ENCODE measurements at regions of chr4 and their contacts with region 1.

Region 1: DNA sequence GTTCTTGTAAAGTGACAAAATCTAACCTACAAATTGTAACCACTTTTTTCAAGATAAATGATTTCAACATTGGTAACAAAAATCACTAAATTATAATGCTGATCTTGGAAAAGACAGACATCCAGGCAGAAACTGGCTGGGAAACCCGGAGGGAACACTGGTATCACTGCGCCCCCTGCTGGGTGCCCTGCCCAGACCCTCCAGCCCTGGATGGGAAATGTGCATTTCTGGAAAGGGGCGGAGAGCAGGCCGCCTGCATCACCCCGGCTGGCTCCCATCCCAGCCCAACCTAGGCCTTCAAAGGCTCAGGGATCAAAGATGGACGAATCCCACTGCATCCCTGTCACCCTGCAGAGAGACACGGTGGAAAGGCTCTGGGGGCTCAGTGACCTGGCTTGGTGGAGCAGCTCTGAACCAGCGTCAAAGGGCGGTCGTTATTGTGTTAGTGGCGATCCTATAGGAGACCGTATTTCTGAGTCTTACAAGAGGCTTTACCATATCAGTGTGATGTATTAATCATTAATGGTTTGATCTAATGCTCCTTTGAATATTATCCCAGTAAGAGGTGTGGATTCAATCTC is 37.3 kb downstream of the ACOX3 start:
- DNase-seq: peak; percentile 87 to 93 (median 90)
- ATAC-seq: peak; percentile 73 to 88 (median 84)
- H3K4me3 ChIP-seq: no peak overlapping the region
- H3K27ac ChIP-seq: peak overlapping the region; percentile 45 to 91 (median 80)
- H3K4me1 ChIP-seq: peaks cover 7 to 44% (median 27%) of the 10 kb centered on the region in 12 donors
- H3K27me3 ChIP-seq: no peaks in the 10 kb centered on the region
- CTCF ChIP-seq: peak; percentile 89 to 97 (median 94)
- POLR2A ChIP-seq: no peak

Region 2: GRCh38 chr4:8110071-8110986 is 292.9 kb before region 1 on chr4:
- intact Hi-C with region 1: no loop called
- DNase-seq: peak in 1 of 5 donors; percentile 47
- ATAC-seq: no peak
- H3K4me3 ChIP-seq: no peak overlapping the region
- H3K27ac ChIP-seq: no peak overlapping the region
- H3K4me1 ChIP-seq: peaks cover 0 to 28% (median 16%) of the 10 kb centered on the region in 12 donors
- H3K27me3 ChIP-seq: no peaks in the 10 kb centered on the region
- CTCF ChIP-seq: peak in 4 of 12 donors; percentile 4 to 17 (median 10)
- POLR2A ChIP-seq: no peak

Region 3: DNA sequence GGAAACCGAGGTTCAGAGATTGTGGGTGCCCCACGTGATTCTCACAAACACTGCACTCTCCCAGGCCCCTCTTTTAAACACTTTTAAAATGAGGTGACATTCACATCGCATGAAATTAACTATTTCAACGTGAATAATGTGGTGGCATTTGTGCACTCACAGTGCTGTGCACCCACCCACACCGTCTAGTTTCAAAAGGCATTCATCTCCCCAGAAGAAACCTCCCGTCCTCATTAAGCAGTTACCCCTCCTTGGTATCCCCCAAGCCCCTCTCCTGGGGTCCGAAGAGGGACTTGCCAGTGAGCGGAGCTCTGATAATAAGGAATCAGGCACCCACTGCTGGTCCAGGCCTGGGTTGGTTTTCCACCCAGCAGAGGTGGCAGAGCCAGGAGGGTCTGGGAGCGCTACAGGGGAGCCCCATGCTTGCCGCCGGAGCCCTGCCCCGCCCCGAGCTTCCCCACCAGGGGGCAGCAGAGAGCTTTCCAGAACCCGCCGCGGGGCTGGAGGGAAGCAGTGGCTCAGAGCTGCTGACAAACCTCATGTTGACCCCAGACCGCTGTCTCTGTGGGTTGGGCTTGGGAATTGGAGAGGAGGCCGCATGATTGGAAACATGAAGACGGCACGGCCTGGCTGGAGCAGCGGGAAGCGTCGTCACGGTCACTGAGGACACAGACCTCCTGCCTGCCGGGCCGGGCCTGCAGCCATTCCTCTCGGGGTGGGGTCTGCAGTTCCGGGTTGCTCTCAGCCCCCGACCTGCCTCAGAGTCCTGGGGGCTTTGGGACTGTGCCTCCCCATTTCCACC is 161.2 kb before region 1 on chr4:
- intact Hi-C with region 1: loop called (anchors 1 to 2 kb)
- DNase-seq: peak; percentile 87 to 93 (median 88)
- ATAC-seq: peak; percentile 75 to 91 (median 86)
- H3K4me3 ChIP-seq: no peak overlapping the region
- H3K27ac ChIP-seq: peak overlapping the region in 7 of 12 donors; percentile 9 to 63 (median 47)
- H3K4me1 ChIP-seq: peaks cover 0 to 21% (median 15%) of the 10 kb centered on the region in 12 donors
- H3K27me3 ChIP-seq: no peaks in the 10 kb centered on the region
- CTCF ChIP-seq: peak; percentile 97 to 100 (median 98)
- POLR2A ChIP-seq: no peak

Region 4: GRCh38 chr4:8267077-8267476 is 136.2 kb before region 1 on chr4:
- intact Hi-C with region 1: loop called in 9 of 10 experiments (anchors 1 to 5 kb)
- DNase-seq: peak; percentile 78 to 90 (median 85)
- ATAC-seq: peak; percentile 60 to 78 (median 64)
- H3K4me3 ChIP-seq: no peak overlapping the region
- H3K27ac ChIP-seq: peak overlapping the region in 8 of 12 donors; percentile 11 to 57 (median 38)
- H3K4me1 ChIP-seq: peaks cover 3 to 52% (median 34%) of the 10 kb centered on the region in 12 donors
- H3K27me3 ChIP-seq: no peaks in the 10 kb centered on the region
- CTCF ChIP-seq: peak; percentile 58 to 88 (median 78)
- POLR2A ChIP-seq: no peak

Region 5: GRCh38 chr4:8315435-8316250 is 87.6 kb before region 1 on chr4:
- intact Hi-C with region 1: loop called in 4 of 10 experiments (anchors 2 to 10 kb)
- DNase-seq: peak in 3 of 5 donors; percentile 35 to 63 (median 57)
- ATAC-seq: peak in 3 of 4 donors; percentile 34 to 56 (median 40)
- H3K4me3 ChIP-seq: no peak overlapping the region
- H3K27ac ChIP-seq: peak overlapping the region in 9 of 12 donors; percentile 18 to 73 (median 49)
- H3K4me1 ChIP-seq: peaks cover 6 to 43% (median 19%) of the 10 kb centered on the region in 12 donors
- H3K27me3 ChIP-seq: no peaks in the 10 kb centered on the region
- CTCF ChIP-seq: no peak
- POLR2A ChIP-seq: no peak